Breast epithelium (tissue), 4 donors: ENCODE measurements at regions of chr1 and their contacts with region 1.

Region 1: DNA sequence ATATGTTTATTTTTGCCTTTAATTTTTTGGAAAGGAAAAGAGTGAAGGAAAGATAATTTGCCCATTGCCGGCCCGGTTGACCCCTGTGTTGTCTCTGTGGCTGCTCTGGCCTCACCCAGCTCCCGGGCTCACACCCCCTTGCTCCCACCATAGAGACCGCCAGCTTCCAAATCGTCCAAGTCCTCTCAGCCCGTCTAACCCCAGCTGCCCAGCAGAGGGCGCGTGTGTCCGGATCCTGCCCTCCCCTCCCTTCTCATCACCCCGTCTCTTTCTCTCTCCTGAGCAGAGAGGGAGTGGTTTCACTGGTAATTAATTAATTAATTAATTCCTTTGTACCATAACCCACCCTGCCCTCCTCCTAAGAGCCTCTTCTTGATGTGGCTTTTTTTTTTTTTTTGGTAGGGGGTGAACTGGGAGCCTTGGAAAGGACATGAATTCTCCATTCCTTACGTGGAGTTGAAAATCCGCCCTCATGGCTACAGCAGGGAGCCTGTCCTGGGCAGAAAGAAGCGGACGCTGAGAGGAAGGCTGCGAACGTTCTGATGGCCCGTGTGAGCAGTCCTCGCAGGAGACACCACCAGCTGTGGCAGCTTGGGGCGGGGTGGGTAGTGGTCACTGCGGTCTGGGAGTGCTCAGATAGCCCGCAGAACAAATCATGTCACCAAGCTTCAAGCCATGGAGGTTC is 45.9 kb downstream of the KIAA0040 start:
- DNase-seq: peak in 1 of 2 donors; percentile 71
- H3K4me3 ChIP-seq: peak overlapping the region in 1 of 3 donors; percentile 12
- H3K27ac ChIP-seq: no peak overlapping the region
- H3K4me1 ChIP-seq: no peaks in the 10 kb centered on the region
- H3K27me3 ChIP-seq: no peaks in the 10 kb centered on the region
- CTCF ChIP-seq: peak; percentile 45 to 71 (median 57)
- POLR2A ChIP-seq: no peak

Region 2: DNA sequence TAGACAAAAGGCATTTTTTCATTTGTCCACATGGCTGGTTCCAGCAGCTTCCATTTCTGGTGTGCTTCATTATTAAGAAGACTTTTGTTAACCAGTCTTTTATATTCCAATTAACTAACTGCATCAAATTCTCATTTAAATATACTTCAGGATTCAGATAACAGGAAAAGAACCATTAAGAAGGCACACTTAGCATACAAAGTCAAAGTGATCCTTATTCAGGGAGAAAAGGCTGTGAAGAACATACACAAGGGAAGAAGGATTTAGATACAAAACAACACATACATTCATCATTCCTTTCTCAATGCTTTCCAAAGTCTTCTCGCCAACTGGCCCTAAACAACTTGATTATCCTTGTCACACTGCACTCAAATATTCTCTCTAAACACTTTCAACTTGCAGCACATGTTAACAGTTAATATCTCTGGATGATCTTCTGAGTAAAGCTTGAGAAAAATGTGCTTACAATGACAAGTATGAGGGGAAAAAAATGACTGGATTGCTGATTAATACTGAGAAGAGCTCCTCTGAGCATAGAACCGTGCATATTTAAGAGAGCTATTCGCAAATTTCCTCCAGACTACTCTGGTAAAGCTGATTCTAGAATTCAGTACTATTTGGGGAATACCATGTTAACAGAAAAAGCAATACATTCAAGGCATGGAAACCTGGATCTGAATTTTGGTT is 822.0 kb after region 1 on chr1:
- intact Hi-C with region 1: no loop called
- DNase-seq: no peak
- H3K4me3 ChIP-seq: no peak overlapping the region
- H3K27ac ChIP-seq: no peak overlapping the region
- H3K4me1 ChIP-seq: no peaks in the 10 kb centered on the region
- H3K27me3 ChIP-seq: no peaks in the 10 kb centered on the region
- CTCF ChIP-seq: no peak
- POLR2A ChIP-seq: no peak

Region 3: DNA sequence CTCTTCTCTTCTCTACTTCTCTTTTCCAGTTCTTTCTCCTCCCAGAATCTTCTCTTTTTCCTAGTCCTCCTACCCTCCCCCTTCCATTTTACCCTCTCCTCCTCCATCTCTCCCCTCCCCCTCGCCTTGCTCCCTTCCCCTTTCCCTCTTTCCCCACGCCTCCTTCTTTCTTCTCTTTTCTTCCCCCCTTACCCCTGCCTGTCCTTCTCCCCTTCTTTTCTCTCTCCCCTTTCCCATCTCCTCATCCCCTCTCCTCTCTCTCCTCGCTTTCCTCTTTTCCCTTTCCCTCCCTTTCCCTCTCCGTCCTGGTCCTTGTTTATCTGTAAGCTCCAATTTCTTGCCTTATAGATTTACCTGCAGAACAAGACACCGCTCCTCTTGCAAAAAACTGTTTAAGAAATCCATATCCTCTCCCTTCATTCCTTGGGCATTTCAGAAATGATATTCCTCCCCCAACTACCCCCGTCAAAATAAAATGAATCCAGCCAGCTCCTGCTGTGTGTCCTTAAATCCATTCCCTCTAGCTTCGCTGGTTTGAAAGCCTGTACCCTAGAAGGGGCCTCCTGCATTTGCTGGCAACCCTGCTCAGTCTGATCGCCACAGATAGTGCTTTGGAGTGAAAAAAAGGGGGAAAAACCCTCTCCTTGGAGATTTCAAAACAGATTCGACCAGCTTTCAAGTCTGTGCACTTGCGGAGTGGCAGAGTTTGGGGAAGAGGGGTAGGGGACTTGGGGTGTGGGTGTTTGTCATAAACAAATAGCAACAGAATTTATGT is 1405.7 kb after region 1 on chr1:
- intact Hi-C with region 1: loop called (anchors 5 kb)
- DNase-seq: no peak
- H3K4me3 ChIP-seq: no peak overlapping the region
- H3K27ac ChIP-seq: no peak overlapping the region
- H3K4me1 ChIP-seq: no peaks in the 10 kb centered on the region
- H3K27me3 ChIP-seq: peaks cover 0 to 40% of the 10 kb centered on the region in 2 donors
- CTCF ChIP-seq: no peak
- POLR2A ChIP-seq: no peak